Activated CD4-positive, alpha-beta T cell treated with anti-CD3 and anti-CD28 coated beads for 36 hours (primary cell): ENCODE measurements at regions of chr4 and their contacts with region 1.

Region 1: DNA sequence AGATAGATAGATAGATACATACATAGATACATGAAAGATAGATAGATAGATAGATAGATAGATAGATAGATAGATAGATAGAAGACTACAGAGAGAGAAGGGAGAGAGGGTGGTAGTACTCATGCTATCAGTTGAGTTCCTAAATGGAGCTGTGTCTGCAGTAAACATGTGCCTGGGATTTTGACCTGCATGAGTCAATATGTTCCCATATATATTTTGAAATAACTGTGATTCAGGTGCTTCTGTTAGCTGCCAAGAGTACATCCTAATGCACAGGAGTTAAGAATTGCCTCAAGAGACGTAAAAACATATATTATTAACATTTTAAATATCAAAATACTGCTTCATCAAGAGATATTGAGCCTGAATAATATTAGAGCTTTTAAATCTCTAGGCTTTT is 379.4 kb downstream of the GRXCR1 start:
- DNase-seq: no peak
- ATAC-seq: no peak
- H3K4me3 Mint-ChIP-seq: no peak overlapping the region
- H3K27ac Mint-ChIP-seq: no peak overlapping the region
- H3K4me1 Mint-ChIP-seq: no peaks in the 10 kb centered on the region
- H3K27me3 Mint-ChIP-seq: no peaks in the 10 kb centered on the region

Region 2: DNA sequence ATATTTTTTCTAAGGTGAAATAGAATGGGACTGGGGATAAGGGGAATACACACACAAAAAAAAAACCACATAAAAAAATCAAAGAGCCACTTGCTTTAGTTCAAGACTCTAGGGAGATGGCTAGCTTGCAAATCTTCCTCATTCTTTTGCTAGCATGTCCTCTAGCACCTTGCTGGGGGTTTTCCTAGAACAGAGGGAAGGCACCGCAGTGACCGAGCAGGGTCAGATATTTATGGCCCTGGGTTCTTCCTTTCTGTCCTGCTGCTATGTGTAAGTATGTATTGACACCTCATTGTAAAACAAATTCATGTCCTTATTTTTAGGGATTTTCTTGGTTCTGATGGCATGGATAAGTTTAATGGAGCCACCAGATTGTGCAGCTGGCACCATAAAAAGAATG is 793.4 kb before region 1 on chr4:
- CTCF ChIA-PET with region 1: no interaction called
- POLR2A ChIA-PET with region 1: no interaction called
- intact Hi-C with region 1: no loop called
- DNase-seq: no peak
- ATAC-seq: no peak
- H3K4me3 Mint-ChIP-seq: no peak overlapping the region
- H3K27ac Mint-ChIP-seq: no peak overlapping the region
- H3K4me1 Mint-ChIP-seq: no peaks in the 10 kb centered on the region
- H3K27me3 Mint-ChIP-seq: no peaks in the 10 kb centered on the region

Region 3: DNA sequence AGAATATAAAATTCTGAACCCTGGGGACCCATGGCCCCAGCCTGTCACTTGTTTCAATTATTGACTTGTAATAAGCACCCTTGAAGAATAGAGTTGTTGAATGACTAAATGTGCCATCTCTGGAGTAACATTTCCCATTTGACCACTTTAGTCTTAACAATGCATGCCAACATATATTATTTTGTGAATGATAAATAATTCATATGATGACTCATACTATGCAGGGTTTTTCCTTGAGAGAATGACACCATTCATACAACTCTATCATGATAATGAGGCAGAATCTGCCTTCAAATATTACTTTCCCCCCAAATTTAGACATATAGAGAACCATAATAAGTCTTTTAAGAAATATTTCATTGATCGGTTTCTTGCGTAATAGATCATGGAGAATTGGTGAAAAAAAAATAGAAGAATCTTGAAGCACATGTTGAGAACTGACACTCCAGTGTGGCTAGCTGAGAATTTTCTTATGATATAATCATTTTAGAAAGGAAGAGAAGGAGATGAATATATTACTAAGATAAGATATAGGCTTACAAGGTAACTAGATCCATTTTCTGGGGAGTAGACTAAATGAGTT is 25.1 kb after region 1 on chr4:
- CTCF ChIA-PET with region 1: no interaction called
- POLR2A ChIA-PET with region 1: no interaction called
- intact Hi-C with region 1: loop called in 1 of 2 experiments (anchors 2 kb)
- DNase-seq: no peak
- ATAC-seq: no peak
- H3K4me3 Mint-ChIP-seq: no peak overlapping the region
- H3K27ac Mint-ChIP-seq: no peak overlapping the region
- H3K4me1 Mint-ChIP-seq: no peaks in the 10 kb centered on the region
- H3K27me3 Mint-ChIP-seq: no peaks in the 10 kb centered on the region

Region 4: DNA sequence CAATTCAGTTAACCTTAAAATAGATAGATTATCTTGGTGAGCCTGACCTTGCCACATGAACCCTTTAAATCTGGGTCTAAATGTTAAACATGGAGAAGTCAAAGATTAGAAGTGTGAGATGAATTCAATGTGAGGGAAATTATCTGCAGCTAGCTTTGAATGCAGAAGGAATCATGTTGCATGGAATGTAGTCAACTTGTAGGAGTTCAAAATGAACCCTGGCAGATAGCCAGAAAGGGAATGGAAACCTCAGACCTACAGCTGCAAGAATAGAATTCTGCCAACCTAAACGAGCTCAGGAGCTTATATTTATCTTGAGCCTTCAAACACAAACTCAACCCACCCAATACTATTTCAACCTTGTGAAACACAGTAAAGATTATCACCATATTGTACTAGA is 544.2 kb after region 1 on chr4:
- CTCF ChIA-PET with region 1: no interaction called
- POLR2A ChIA-PET with region 1: no interaction called
- intact Hi-C with region 1: no loop called
- DNase-seq: no peak
- ATAC-seq: no peak
- H3K4me3 Mint-ChIP-seq: no peak overlapping the region
- H3K27ac Mint-ChIP-seq: no peak overlapping the region
- H3K4me1 Mint-ChIP-seq: no peaks in the 10 kb centered on the region
- H3K27me3 Mint-ChIP-seq: no peaks in the 10 kb centered on the region